ENCODE measurements at regions of chr6 and their contacts with region 1.

Region 1: DNA sequence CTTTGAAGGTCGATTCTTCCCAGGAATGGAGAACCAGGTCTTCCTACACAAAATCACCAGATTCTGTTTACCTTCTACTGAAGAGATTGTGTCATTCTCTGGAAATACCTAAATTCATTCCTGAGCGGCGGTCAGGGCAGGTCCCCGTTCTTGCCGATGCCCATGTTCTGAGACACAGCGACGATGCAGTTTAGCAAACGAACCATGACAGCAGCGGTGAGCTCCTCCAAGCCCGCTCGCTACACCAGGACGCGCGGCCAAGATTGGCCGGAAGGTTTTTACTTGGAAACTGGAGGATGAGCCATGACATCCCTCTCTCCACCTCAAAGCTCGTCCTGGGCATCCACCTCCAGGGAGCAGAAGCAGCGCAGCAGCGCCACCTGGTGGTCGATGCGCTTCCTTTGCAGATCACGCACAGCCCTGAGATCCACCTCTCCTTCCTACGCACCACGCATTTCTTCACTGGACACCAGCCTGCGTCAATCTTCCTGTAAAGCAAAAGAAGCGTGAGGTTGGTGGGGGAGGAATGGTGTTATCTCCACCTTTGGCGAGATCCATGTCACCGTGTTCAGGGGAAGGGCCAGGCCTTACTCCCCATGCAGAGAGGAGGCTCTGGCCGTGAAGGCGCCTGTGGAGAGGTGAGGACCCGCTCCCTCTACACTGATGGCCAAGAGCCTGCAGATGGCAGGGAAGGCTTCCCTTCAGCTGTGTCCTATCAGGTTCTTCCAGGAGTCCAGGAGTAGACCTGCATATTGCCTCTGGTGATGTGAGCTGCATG is 9.9 kb upstream of the HLA-B start:
- DNase-seq: peak; percentile 42
- H3K4me3 ChIP-seq: peak overlapping the region; percentile 38
- CTCF ChIP-seq: peak; percentile 99

Region 2: DNA sequence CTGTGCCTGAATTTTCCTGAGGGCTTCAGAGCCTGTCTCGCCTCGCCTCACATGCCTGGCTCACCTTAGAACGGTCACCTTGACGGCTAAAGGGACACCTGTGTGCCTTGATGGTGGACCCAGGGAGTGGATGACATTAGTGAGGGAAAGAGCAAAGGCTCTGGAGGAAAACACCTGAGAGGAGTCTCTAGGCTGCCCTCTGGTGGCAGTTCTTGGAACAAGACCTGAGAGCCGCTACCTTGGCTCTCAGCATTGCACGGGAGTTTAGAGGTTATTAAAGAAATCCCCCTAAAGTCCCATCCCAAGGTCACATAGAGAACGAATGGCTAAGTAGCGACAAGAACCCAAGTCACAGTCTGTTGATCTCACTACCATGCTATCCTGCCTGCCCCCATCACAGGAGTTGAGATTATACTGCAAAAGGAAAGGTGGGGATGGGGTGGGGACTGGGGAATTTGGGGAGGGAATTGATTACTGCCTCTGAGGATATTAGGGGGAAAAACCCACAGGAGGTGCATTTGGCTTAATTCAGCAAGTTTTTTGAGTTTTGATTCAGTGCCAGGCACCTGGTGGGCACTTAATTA is 238.7 kb before region 1 on chr6:
- CTCF ChIA-PET with region 1: interaction called, 16 read pairs
- POLR2A ChIA-PET with region 1: no interaction called
- DNase-seq: no peak
- H3K4me3 ChIP-seq: no peak overlapping the region
- CTCF ChIP-seq: peak; percentile 68

Region 3: DNA sequence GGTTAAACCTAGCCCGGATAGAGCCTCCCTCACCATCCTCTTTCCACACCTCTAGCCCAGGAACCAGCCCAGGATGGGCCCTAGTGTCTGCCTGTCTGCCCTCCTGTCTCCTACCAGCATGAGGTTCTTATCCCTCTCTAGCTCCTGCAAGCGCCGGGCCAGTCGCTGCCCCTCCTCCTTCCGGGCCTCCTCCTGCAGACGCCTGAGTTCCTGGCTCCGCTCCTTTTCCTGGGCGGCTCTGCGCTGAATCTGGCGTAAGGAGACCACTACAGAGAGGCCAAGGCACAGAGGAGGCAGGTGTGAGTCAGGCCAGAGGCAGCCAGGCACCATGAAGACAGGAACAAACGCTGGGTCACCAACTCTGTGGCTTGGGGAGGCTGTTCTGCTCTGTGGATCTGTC is 223.7 kb before region 1 on chr6:
- CTCF ChIA-PET with region 1: interaction called, 39 read pairs
- POLR2A ChIA-PET with region 1: no interaction called
- DNase-seq: no peak
- H3K4me3 ChIP-seq: no peak overlapping the region
- CTCF ChIP-seq: no peak

Region 4: DNA sequence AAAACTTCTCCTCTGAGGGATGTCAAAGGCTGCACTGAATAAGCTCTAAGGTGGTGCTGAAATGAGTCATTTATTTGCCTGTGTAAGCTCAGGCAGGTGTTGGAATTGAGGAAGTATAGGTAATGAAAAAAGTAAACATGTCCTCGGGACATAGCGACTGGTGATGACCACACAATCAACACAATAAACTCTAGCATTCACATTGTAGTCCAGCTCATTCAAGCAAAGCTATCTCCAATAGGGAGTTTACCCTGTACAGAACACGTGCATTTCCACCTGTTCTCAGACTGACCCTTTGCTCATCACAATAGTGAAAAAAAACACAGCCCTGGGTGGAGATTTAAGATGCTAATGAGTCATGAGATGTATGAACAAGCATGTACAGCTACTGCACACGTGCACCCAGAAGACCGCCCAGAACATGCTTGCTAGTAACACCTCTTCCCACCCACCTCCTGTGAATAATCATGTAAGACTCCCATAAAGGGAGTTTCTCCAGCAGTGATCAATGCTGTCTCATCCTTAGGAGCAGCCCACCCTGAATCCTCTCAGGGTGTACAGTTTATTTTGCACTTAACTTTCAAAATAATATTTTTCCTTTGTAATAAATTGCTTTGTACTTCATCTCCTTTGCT is 163.4 kb before region 1 on chr6:
- CTCF ChIA-PET with region 1: interaction called, 286 read pairs
- POLR2A ChIA-PET with region 1: no interaction called
- DNase-seq: no peak
- H3K4me3 ChIP-seq: peak overlapping the region; percentile 52
- CTCF ChIP-seq: no peak

Region 5: DNA sequence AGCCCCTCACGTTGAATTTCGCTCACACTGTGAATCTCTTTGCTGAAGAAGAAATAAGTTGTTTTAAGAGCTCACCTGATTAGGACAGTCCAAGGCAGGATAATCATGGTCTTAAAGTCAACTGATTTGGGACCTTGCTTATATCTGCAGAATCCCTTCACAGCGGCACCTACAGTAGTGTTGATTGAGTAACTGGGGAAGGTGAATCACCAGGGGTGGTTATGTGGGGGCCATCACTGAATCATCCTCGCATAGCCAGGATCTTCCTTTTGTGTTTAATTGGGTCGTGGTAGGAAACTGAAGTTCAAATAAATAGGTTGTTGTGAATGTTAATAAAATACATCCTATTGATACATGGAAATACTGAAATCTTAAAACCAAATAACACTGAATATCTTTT is 16.3 kb after region 1 on chr6:
- CTCF ChIA-PET with region 1: interaction called, 112 read pairs
- POLR2A ChIA-PET with region 1: no interaction called
- DNase-seq: no peak
- H3K4me3 ChIP-seq: no peak overlapping the region
- CTCF ChIP-seq: no peak

Region 6: DNA sequence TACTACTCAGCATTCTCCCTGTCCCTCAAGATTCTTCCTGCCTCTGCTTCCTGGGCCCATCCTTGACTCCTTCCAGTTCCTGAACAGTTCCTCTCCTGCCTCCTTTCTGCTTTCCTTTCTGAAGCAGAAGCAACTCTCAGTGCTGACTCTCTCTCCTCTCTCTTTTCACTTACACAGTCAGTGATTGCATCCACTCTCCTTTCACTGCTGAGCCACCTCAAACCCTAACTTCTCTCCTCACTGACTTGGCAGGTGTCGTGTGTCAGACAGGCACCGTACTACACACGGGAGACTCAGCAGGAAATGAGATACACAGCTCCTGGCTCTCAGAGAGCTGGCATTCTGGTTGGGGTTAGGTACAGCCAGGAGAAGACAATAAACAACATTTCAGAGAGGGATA is 330.7 kb after region 1 on chr6:
- CTCF ChIA-PET with region 1: no interaction called
- POLR2A ChIA-PET with region 1: no interaction called
- DNase-seq: no peak
- H3K4me3 ChIP-seq: no peak overlapping the region
- CTCF ChIP-seq: no peak